A549 (cell line): ENCODE measurements at regions of chrX and their contacts with region 1.

Region 1: DNA sequence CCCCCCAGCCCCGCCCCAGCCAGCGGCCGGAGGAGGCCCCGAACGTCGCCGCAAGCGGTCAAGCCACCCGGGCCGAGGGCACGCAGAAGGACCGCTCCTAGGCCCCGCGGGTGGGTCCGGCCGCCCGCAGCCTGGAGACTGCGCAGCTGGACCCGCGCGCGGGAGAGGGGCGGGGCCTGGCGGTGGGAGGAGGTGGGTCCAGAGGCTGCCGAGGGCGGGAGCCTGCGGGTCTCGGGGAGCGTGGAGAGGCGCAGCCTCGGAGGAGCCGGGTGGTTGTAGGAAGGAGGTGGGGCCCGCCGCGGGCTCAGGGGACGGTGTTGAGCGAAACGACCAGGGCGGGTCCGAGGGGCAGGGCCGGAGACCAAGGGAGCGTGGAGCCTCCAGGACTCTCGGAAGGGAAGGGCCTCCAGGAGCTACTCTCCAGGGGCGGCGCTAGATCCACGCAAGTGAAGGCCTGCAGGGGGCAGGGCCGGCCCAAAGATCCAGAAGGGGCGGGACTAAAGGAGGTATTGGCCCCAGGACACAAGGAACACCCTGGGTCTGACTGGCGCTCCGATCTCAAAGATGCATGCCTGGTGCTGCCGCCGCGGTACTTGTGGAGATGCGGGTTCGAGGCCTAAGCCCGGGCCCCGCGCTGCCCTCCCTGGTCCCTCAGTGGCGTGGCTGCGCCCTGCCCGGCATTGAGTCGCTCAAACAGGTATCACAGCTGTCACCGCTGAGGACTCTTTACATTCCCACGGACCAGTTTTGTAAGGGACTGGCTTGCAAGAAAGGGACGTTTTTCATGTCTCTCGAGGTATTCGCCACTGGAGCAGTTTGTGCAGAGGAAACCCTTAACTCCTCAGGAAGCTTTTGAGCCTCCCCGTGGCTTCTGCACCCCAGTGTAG is 5.9 kb downstream of the TIMM17B start:
- DNase-seq: peak; percentile 76 to 95
- ATAC-seq: peak; percentile 96 to 97
- H3K4me3 ChIP-seq: peak overlapping the region; percentile 85
- H3K27ac ChIP-seq: peak overlapping the region; percentile 88 to 99
- H3K4me1 ChIP-seq: peaks cover 12% of the 10 kb centered on the region; the same call in 2 of the 3 replicates
- CTCF ChIP-seq: peak; percentile 43
- EP300 ChIP-seq: no peak
- POLR2A ChIP-seq: peak; percentile 45
- RAD21 ChIP-seq: peak; percentile 50 to 59

Region 2: GRCh38 chrX:48761674-48762471 is 129.8 kb before region 1 on chrX and contains the start of gene GLOD5:
- CTCF ChIA-PET with region 1: no interaction called
- POLR2A ChIA-PET with region 1: no interaction called
- DNase-seq: peak in 1 of 2 experiments; percentile 39
- ATAC-seq: peak; percentile 95
- H3K4me3 ChIP-seq: no peak within 1 kb of the TSS
- H3K27ac ChIP-seq: no peak within 1 kb of the TSS
- H3K4me1 ChIP-seq: no peaks in the 10 kb centered on the region
- CTCF ChIP-seq: peak; percentile 31; the same call in 2 of the 3 replicates
- EP300 ChIP-seq: no peak
- POLR2A ChIP-seq: no peak
- RAD21 ChIP-seq: peak; percentile 59 to 65
- polyA plus RNA-seq, gene GLOD5: not detected in 2 replicates

Region 3: DNA sequence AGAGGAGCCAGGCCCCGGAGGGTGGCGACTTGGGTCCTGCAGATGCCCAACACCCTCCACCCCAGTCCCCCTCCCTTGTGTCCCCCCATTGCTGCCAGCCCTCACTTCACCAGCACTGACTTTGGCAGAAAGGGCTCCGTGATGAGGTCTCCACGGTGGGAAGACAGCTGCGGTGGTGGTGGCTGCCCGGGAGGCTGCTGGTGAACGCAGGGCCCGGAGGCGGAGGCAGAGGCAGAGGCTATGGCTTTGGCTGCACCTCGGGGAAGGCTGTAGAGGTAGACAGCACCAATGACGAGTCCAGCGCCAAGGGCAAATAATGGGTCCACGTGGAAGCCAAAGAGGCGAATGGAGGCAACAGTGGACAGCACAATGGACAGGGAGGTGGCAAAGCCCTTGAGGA is 13.0 kb after region 1 on chrX:
- CTCF ChIA-PET with region 1: interaction called, 10 read pairs
- POLR2A ChIA-PET with region 1: interaction called, 7 read pairs
- DNase-seq: no peak
- ATAC-seq: peak; percentile 38 to 44; a peak in 4 of 6 replicates
- H3K4me3 ChIP-seq: no peak overlapping the region
- H3K27ac ChIP-seq: no peak overlapping the region
- H3K4me1 ChIP-seq: peaks cover under 1% of the 10 kb centered on the region; the same call in 2 of the 3 replicates
- CTCF ChIP-seq: no peak
- EP300 ChIP-seq: no peak
- POLR2A ChIP-seq: no peak
- RAD21 ChIP-seq: no peak

Region 4: GRCh38 chrX:48911412-48912182 is 20.0 kb after region 1 on chrX and contains the start of gene SLC35A2:
- CTCF ChIA-PET with region 1: interaction called, 14 read pairs
- POLR2A ChIA-PET with region 1: interaction called, 12 read pairs
- DNase-seq: peak; percentile 79 to 87
- ATAC-seq: peak; percentile 95 to 96
- H3K4me3 ChIP-seq: peak within 1 kb of the TSS; percentile 99
- H3K27ac ChIP-seq: peak within 1 kb of the TSS; percentile 81 to 94
- H3K4me1 ChIP-seq: peaks cover 13% of the 10 kb centered on the region
- CTCF ChIP-seq: no peak
- EP300 ChIP-seq: no peak
- POLR2A ChIP-seq: peak; percentile 65
- RAD21 ChIP-seq: no peak
- polyA plus RNA-seq, gene SLC35A2: 39.4 and 64.2 TPM in 2 replicates

Region 5: GRCh38 chrX:48917139-48918001 is 25.7 kb after region 1 on chrX:
- CTCF ChIA-PET with region 1: interaction called, 14 read pairs
- POLR2A ChIA-PET with region 1: interaction called, 12 read pairs
- DNase-seq: peak; percentile 79 to 92
- ATAC-seq: peak; percentile 57 to 78
- H3K4me3 ChIP-seq: peak overlapping the region; percentile 87
- H3K27ac ChIP-seq: peak overlapping the region; percentile 92 to 95; a peak in 4 of 6 replicates
- H3K4me1 ChIP-seq: peaks cover 18% of the 10 kb centered on the region
- CTCF ChIP-seq: peak; percentile 92
- EP300 ChIP-seq: no peak
- POLR2A ChIP-seq: no peak
- RAD21 ChIP-seq: peak; percentile 54 to 63; a peak in 4 of 5 replicates

Region 6: GRCh38 chrX:48945516-48946348 is 54.1 kb after region 1 on chrX:
- CTCF ChIA-PET with region 1: interaction called, 12 read pairs
- POLR2A ChIA-PET with region 1: no interaction called
- DNase-seq: peak; percentile 61 to 62
- ATAC-seq: peak; percentile 92 to 96
- H3K4me3 ChIP-seq: no peak overlapping the region
- H3K27ac ChIP-seq: no peak overlapping the region
- H3K4me1 ChIP-seq: no peaks in the 10 kb centered on the region
- CTCF ChIP-seq: peak; percentile 78
- EP300 ChIP-seq: no peak
- POLR2A ChIP-seq: no peak
- RAD21 ChIP-seq: peak; percentile 64 to 71